ENCODE measurements at regions of chr16 and their contacts with region 1.

Region 1: GRCh38 chr16:57265850-57266530 is 18.5 kb downstream of the PLLP start:
- DNase-seq: no peak
- ATAC-seq: no peak
- H3K4me3 ChIP-seq: no peak overlapping the region
- H3K27ac ChIP-seq: no peak overlapping the region
- H3K4me1 ChIP-seq: no peaks in the 10 kb centered on the region
- H3K27me3 ChIP-seq: no peaks in the 10 kb centered on the region
- CTCF ChIP-seq: no peak
- EP300 ChIP-seq: no peak
- POLR2A ChIP-seq: no peak
- RAD21 ChIP-seq: no peak

Region 2: DNA sequence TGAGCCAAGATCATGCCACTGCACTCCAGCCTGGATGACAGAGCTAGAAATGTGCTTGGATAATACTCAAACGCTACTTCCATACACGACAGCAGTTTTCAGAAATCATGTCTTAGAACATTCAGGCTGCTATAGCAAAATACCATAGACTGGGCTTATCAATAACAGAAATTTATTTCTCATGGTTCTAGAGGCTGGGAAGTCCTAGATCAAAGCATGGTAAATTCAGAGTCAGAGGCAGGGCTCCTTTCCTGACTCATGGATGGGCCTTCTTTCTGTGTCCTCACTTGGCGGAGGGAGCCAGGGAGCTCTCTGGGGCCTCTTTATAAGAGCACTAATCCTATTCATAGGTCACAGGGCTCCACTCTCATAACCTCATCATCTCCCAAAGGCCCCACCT is 358.6 kb before region 1 on chr16:
- CTCF ChIA-PET with region 1: no interaction called
- POLR2A ChIA-PET with region 1: no interaction called
- RAD21 ChIA-PET with region 1: no interaction called
- SMC1A ChIA-PET with region 1: no interaction called
- in situ Hi-C with region 1: no loop called
- intact Hi-C with region 1: no loop called
- DNase-seq: no peak
- ATAC-seq: no peak
- H3K4me3 ChIP-seq: no peak overlapping the region
- H3K27ac ChIP-seq: no peak overlapping the region
- H3K4me1 ChIP-seq: peaks cover 25% of the 10 kb centered on the region
- H3K27me3 ChIP-seq: no peaks in the 10 kb centered on the region
- CTCF ChIP-seq: no peak
- EP300 ChIP-seq: no peak
- POLR2A ChIP-seq: no peak
- RAD21 ChIP-seq: no peak

Region 3: DNA sequence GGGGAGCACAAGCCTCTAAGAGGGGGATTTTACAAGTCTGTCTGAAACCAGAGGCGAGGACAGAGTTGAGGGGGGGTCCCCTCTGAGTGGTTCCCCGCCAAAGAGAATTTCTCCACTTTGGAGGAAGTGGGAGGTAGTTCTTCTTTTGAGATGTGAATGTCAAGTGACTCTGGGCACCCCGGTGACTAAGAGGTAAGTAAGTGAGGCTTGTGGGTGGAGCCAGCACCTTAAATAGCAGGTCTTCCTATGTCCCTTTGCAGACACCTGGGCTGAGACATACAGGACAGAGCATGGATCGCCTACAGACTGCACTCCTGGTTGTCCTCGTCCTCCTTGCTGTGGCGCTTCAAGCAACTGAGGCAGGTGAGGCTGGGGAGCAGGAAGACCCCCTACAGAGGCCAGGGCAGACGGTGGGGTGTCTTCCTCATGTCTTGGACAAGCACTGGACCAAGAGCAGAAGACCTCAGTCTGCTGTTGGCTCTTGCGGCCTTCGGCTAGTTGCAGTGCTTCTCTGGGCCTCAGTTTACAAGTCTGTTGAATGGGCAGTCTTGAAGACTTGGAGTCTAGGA is 92.6 kb after region 1 on chr16 and contains the start of gene CCL22:
- CTCF ChIA-PET with region 1: no interaction called
- POLR2A ChIA-PET with region 1: interaction called, 10 read pairs
- RAD21 ChIA-PET with region 1: no interaction called
- SMC1A ChIA-PET with region 1: no interaction called
- in situ Hi-C with region 1: no loop called
- intact Hi-C with region 1: no loop called
- DNase-seq: peak; percentile 45
- ATAC-seq: peak; percentile 71
- H3K4me3 ChIP-seq: peak within 1 kb of the TSS; percentile 37; the same call in 1 of the 2 replicates
- H3K27ac ChIP-seq: peak within 1 kb of the TSS; percentile 30
- H3K4me1 ChIP-seq: peaks cover 23% of the 10 kb centered on the region
- H3K27me3 ChIP-seq: no peaks in the 10 kb centered on the region
- CTCF ChIP-seq: no peak
- EP300 ChIP-seq: no peak; a peak in 1 of 4 replicates
- POLR2A ChIP-seq: peak; percentile 89
- RAD21 ChIP-seq: no peak
- polyA plus RNA-seq, gene CCL22: 581 to 591 TPM

Measured in GM12878 (cell line).